Colonic mucosa (tissue), 4 donors: ENCODE measurements at regions of chr11 and their contacts with region 1.

Region 1: DNA sequence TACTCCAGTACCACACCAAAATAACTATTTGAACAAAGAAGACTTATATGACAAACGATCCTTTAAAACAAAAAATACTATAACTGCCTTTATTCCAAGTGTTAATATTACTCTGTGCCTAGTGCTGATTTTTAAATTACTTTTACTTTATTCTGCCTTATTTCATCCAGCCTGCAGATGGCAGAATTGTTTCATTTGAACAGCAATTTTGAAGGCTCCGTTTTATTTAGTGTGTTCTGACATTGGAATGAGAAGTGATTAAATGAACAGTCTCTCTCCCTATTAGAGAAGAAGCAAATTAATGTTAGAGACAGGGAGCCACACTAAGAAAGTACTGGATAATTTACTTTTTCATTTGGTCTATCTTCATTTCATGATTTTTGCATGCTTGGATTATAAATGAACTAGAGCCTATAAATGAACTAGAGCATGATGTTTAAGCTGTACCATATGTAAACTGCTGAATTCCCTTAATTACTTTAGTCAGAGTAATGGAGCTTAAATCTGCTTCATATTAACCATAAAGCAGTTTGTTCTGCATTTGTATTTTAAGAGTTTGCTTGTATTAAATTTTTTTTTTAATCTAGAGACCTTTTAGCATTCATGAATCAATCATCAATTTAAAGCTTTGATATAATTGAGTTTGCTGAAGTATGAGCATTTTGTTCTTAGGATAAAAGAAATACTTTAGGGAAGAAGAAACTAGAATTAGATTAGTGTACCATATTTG is 9.8 kb downstream of the PDHX start:
- DNase-seq: no peak
- H3K4me3 ChIP-seq: no peak overlapping the region
- H3K27ac ChIP-seq: no peak overlapping the region
- H3K4me1 ChIP-seq: peaks cover 3% of the 10 kb centered on the region
- H3K27me3 ChIP-seq: no peaks in the 10 kb centered on the region
- CTCF ChIP-seq: peak; percentile 66

Region 2: DNA sequence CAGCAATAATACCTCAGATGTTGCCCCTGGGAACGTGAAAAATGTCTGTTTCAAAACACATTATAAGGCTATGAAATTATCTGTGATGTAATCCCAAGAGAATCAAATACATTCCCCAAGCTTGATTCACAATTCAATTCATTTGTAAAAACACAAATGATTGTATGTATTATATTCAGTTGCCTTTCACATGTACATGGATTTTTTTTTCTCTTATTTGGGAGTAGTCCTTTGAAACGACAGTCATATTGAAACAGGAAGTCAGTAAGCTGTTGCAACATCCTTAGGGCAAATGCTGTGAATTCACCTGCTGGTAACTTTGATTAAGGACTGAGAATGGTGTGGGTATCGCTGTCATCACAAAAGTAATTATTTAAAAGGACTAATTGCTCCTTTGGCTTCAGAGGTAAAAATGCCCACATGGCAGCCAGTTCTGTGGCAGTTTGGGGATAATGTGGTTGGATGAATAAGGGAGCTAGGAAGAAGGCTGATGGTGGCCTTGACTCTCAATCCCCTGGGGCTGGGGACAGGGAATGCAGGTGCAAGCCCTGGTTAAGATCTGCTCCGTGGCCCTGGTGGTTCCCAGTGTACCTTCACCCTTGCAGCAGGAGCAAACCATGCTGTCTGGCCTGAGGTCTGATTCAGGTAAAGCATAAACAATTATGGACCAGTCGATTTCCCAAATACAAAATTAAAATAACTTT is 292.1 kb before region 1 on chr11:
- intact Hi-C with region 1: no loop called
- DNase-seq: no peak
- H3K4me3 ChIP-seq: no peak overlapping the region
- H3K27ac ChIP-seq: peak overlapping the region; percentile 76
- H3K4me1 ChIP-seq: peaks cover 17% of the 10 kb centered on the region
- H3K27me3 ChIP-seq: no peaks in the 10 kb centered on the region
- CTCF ChIP-seq: no peak

Region 3: GRCh38 chr11:35237860-35238715 is 311.8 kb after region 1 on chr11:
- intact Hi-C with region 1: loop called (anchors 5 kb)
- DNase-seq: peak; percentile 61
- H3K4me3 ChIP-seq: no peak overlapping the region
- H3K27ac ChIP-seq: no peak overlapping the region
- H3K4me1 ChIP-seq: no peaks in the 10 kb centered on the region
- H3K27me3 ChIP-seq: no peaks in the 10 kb centered on the region
- CTCF ChIP-seq: peak; percentile 71

Region 4: GRCh38 chr11:35305670-35306382 is 379.6 kb after region 1 on chr11:
- intact Hi-C with region 1: loop called (anchors 5 kb)
- DNase-seq: peak; percentile 45
- H3K4me3 ChIP-seq: no peak overlapping the region
- H3K27ac ChIP-seq: no peak overlapping the region
- H3K4me1 ChIP-seq: no peaks in the 10 kb centered on the region
- H3K27me3 ChIP-seq: no peaks in the 10 kb centered on the region
- CTCF ChIP-seq: peak; percentile 48

Region 5: GRCh38 chr11:35391922-35392813 is 465.9 kb after region 1 on chr11:
- intact Hi-C with region 1: loop called (anchors 5 kb)
- DNase-seq: peak; percentile 89
- H3K4me3 ChIP-seq: no peak overlapping the region
- H3K27ac ChIP-seq: no peak overlapping the region
- H3K4me1 ChIP-seq: peaks cover 11% of the 10 kb centered on the region
- H3K27me3 ChIP-seq: no peaks in the 10 kb centered on the region
- CTCF ChIP-seq: peak; percentile 81